Right ventricle myocardium inferior (tissue), 1 donor: ENCODE measurements at regions of chr17 and their contacts with region 1.

Region 1: GRCh38 chr17:79991140-79991923 is 44.3 kb downstream of the TBC1D16 start:
- DNase-seq: peak; percentile 90
- ATAC-seq: peak; percentile 89

Region 2: DNA sequence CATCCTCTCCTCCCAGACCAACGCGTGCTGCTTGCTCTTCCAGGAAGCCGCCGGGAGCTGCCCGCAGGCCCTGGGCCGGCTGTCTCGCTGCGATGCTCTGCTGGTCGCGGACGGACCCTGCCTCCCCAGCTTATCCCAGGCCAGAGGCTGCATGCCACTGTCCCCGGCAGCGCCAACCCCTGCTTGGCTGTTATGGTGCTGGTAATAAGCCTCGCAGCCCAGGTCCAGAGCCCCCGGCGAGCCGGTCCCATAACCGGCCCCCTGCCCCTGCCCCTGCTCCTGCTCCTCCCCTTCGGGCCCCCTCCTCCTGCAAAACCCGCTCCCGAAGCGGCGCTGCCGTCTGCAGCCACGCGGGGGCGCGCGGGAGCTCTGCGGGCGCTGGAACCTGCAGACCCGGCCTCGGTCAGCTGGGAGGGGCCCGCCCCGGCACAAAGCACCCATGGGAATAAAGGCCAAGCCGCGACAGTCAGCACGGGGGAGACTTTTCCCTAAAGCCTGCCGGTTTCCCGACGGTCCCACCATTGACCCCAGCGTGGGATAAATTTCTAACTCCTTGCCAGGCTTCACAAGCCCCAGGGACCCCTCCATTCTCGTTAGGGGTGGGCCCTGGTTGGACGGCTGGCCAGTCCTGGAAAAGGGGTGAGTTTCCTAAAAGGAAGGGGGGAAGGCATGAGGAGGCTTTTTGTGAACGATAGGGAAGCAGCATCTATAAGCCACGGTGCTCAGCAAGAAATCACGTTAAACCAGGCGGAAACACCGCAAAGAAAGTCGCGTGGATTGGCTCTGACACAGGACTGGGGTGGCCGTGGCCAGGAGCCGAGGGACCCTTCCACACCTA is 249.4 kb before region 1 on chr17:
- intact Hi-C with region 1: loop called (anchors 5 kb)
- DNase-seq: peak; percentile 89
- ATAC-seq: peak; percentile 65

Region 3: DNA sequence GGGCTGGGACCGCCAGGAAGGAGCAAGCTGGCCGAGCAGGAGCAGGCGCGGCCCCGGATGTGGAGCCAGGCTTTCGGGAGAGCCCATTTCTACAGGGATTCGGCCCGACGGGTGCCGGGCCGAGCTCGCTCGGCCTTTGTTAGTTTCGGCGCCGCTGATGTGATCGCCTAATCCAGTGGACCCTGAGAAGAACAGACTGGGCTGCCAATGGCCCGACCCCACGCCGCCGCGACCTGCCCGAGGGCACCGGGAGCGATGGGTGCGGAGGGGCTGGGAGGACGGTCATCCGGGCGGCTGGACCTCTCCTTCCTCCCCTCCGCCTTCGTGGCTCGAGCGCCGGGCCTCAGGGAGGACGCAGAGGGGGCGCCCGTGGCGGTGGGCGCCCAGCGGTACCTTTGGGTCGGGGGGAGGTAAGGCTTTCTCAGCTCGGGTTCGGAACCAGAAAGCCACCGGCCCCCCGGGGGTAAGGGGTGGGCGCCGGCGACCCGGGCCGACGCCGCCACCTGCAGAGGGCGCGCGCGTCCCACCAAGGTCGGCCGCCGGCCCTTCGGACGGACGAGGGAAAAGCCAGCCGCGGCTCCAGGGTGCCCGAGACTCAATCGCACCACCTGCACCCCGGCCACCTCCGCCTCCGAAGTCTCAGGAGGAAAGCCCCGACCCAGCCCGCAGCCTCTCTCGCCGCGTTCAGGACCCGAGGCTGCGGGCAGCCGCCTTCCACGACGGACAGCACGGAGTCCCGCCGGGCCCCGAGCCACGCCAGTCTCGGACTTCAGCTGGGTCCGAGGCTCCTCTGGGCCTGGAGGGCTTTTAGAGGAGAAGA is 201.6 kb before region 1 on chr17:
- intact Hi-C with region 1: loop called (anchors 5 kb)
- DNase-seq: no peak
- ATAC-seq: peak; percentile 53

Region 4: DNA sequence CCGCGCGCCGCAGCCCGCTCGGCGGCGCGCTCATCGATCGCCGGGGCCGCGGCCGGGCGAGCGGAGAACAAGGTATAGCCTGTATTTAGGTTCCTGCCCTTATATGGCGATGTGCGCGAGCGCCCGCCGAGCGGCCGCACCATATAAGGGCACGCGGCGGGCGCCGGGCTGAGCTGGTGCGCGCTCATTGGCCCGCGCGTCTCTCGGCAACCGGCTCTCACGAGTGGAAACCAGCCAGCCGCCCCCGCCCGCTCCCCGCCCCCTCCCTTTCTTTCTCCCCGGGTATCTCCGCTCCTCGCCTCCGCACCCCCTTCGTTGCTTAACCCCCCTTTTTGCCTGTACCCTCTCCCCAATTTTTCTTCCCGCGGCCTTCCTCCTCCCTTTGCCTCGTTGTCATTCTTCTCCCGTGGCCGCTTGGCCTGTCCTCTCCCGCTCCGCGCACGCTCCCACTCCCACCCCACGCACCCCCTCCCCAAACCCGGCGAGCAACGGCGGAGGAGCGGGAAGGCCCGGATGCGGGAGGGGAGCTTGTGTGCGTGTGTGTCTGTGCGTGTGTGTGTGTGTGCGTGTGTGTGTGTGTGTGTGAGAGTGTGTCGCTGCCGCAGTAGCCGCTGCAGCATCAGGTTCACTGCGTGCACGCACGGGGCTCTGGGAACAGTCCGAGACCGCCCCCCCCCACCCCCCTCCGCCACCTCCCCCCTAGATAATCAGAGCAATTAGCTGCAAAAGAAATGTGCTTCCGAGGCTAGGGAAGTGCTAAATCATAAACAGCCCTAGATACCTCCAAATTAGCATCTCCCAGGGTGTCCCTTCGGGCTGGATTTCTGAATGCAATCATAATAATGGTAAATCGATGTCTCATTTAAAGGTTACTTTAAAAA is 181.0 kb before region 1 on chr17:
- intact Hi-C with region 1: loop called (anchors 2 kb)
- DNase-seq: peak; percentile 91
- ATAC-seq: peak; percentile 82

Region 5: GRCh38 chr17:80187515-80187941 is 196.2 kb after region 1 on chr17:
- intact Hi-C with region 1: no loop called
- DNase-seq: peak; percentile 79
- ATAC-seq: peak; percentile 75